ENCODE measurements at regions of chr15 and their contacts with region 1.

Region 1: GRCh38 chr15:82999905-83000671 is 11.4 kb downstream of the C15orf40 start:
- DNase-seq: no peak
- ATAC-seq: peak; percentile 86

Region 2: DNA sequence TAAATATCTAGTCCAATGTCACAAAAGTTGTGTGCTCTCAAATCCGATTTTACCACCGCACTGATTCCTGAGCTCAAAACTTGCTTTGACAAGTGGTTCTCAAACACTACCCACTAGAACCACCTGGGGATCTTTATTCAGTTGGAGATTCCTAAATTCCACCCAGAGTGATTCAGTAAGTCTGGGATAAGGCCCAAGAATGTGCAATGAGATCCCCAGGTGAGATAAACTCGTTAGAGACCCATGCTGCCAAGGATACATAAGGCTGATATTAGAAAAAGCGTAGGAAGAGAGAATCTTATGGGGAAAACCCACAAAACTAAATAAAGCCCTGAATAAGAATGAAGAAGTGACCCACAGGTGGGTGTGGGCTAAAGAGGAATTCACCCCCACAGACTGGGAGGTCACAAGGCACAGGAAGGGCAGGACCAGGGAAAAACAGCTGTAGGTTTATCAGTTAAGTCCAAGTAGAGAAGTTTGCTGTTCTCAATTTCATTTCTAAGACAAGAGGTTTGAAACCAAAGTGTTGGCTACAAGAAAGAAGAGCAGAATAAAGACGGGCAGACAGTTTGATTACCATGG is 448.3 kb before region 1 on chr15:
- intact Hi-C with region 1: no loop called
- DNase-seq: no peak
- ATAC-seq: no peak

Region 3: GRCh38 chr15:82849556-82850512 is 150.3 kb before region 1 on chr15:
- intact Hi-C with region 1: loop called (anchors 5 kb)
- DNase-seq: peak; percentile 86
- ATAC-seq: peak; percentile 96

Measured in Right ventricle myocardium superior (tissue), 1 donor.